A673 (cell line): ENCODE measurements at regions of chr10 and their contacts with region 1.

Region 1: DNA sequence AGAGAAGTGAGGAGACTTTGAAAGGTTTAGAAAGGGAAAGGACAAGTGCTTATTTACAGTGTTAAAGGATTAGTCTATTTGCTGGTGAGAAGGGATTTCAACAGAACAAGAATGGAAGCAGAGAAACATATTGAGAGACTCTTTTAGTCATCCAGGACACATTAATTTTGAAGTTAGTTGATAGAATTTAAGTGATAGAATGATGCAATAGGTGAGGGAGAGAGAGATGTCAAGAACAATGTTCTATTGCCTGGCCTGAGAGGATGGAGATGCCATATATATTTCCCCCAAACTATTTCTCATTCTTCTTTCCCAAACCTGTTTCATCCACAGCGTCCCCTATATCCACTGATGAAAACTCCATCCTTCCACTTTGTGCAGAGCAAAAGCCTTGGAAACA is 1028.6 kb downstream of the GATA3 start:
- DNase-seq: no peak
- H3K4me3 ChIP-seq: no peak overlapping the region
- H3K27ac ChIP-seq: no peak overlapping the region
- H3K4me1 ChIP-seq: no peaks in the 10 kb centered on the region
- H3K27me3 ChIP-seq: no peaks in the 10 kb centered on the region
- CTCF ChIP-seq: no peak

Region 2: GRCh38 chr10:8910321-8910720 is 172.8 kb before region 1 on chr10:
- CTCF ChIA-PET with region 1: no interaction called
- POLR2A ChIA-PET with region 1: no interaction called
- intact Hi-C with region 1: no loop called
- DNase-seq: no peak
- H3K4me3 ChIP-seq: no peak overlapping the region
- H3K27ac ChIP-seq: no peak overlapping the region
- H3K4me1 ChIP-seq: no peaks in the 10 kb centered on the region
- H3K27me3 ChIP-seq: no peaks in the 10 kb centered on the region
- CTCF ChIP-seq: no peak

Region 3: DNA sequence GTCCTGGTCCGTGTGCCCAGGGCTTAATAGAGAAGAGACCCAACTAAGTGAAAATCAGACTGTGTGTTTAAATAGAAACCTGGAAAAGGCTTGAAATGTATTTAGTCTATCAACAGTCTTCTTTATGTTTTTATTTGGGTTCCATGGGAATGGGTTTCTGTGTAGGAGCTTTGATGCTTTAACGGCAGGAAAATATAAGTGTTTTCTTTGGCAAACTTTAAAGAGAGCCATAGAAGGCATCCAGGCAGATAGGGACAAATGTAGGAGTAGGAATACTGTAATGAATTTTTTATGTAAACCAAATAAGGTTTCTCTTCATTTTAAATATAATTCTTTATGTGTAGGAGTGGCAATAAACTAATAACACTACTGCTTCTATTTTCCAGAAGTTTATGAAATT is 39.6 kb before region 1 on chr10:
- CTCF ChIA-PET with region 1: no interaction called
- POLR2A ChIA-PET with region 1: no interaction called
- intact Hi-C with region 1: no loop called
- DNase-seq: no peak
- H3K4me3 ChIP-seq: no peak overlapping the region
- H3K27ac ChIP-seq: no peak overlapping the region
- H3K4me1 ChIP-seq: no peaks in the 10 kb centered on the region
- H3K27me3 ChIP-seq: no peaks in the 10 kb centered on the region
- CTCF ChIP-seq: no peak

Region 4: GRCh38 chr10:9253108-9253507 is 170.0 kb after region 1 on chr10:
- CTCF ChIA-PET with region 1: no interaction called
- POLR2A ChIA-PET with region 1: interaction called, 11 read pairs
- intact Hi-C with region 1: no loop called
- DNase-seq: peak; percentile 8
- H3K4me3 ChIP-seq: no peak overlapping the region
- H3K27ac ChIP-seq: no peak overlapping the region
- H3K4me1 ChIP-seq: no peaks in the 10 kb centered on the region
- H3K27me3 ChIP-seq: no peaks in the 10 kb centered on the region
- CTCF ChIP-seq: no peak